Left cardiac atrium (tissue), 4 donors: ENCODE measurements at regions of chr6 and their contacts with region 1.

Region 1: DNA sequence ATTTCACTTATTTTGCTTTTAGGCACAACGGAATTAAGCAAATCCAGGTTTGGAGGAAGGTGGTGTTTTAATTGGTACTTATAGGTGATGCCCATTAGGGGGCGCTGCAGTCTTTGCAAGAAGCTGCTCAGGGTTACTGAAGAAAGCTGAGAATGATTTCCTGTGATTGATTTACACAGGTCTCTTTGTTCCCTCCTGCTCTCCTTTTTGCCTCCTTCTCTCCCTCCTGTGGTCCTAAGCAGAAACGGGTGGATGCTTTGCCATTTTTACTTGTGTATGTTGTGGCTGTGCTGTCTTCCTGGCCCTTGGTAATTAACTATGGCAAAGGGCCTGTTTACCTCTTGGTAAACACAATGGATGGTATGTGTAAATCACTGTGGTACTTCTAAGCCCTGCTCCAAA is 97.8 kb downstream of the ANKS1A start:
- DNase-seq: peak; percentile 76
- ATAC-seq: peak; percentile 79 to 80

Region 2: DNA sequence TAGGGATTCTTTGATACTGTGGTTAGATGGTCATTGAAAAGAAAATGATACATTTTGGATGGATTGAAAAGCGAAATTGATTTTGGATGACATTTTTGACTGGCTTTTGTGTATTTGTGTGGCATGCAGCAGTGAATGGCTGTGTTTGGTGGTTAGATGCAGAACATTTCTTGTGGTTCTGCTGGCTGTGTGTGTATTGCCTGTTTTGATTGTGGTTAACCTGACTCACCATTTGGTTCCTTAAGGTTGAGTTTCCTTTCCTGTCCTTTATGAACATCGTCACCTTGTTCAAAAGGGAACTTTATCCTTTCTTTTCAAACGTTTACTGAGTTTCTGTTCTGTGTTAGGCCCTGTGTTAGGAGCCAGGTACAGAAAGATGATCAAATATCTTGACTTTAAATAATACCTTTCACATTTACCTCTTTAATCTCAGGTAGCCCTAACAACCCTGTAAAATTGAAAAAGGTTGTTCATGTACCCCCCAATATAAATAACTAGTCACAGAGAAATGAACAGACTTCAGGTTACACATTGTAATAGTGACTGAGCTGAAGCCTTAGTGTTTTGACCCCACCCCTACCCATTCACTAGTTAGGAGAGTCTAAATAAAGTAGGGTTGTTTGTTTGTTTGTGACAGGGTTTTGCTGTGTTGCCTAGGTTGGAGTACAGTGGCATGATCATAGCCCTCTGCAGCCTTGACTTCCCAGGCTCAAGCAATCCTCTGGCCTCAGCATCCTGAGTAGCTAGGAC is 74.0 kb before region 1 on chr6:
- intact Hi-C with region 1: no loop called
- DNase-seq: no peak
- ATAC-seq: no peak

Region 3: DNA sequence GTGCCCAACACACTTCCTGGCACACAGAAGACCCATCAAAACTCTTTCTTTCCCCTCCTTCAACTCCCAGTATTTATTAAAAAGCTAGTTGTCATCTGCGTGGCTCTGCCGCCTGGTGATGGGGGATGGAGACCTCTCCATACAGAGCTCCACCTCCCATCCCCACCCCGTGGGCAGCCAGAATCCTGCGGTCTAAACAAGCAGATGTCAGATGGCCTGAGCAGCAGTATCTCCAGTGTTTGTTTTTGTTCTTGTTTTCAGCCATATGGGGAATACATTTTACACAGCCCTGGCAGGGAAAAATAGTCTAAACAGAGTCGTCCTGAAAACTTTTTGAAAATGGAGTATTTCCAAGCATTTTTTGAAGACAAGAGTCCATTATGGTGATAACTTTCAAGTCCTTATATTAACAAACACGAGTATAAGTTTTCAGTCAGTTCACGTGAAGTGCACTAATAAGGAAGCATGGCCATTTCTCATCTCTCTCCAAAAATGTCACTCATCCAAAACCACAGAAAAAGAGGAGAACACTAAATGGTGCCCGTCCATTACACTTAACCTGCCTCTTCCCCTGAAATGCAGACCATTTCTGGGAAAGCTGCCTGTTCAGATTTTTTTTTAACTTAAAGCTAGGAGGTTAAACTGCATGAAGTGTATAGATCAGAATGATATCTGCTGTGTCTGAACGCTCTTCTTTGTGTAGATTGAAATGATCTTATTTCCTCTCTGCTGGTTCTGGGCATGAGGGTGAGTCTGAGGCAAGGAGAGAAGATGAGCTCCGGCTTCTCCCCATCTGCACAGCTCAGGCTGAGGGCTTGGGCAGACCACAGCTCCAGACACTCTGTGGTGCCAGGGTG is 63.3 kb after region 1 on chr6:
- intact Hi-C with region 1: loop called in 1 of 2 experiments (anchors 10 kb)
- DNase-seq: no peak
- ATAC-seq: peak; percentile 23 to 54

Region 4: GRCh38 chr6:35240840-35241801 is 254.3 kb after region 1 on chr6:
- intact Hi-C with region 1: loop called in 1 of 2 experiments (anchors 10 kb)
- DNase-seq: peak; percentile 68
- ATAC-seq: peak; percentile 43 to 65